Naive thymus-derived CD4-positive, alpha-beta T cell (primary cell): ENCODE measurements at regions of chr4 and their contacts with region 1.

Region 1: GRCh38 chr4:6327041-6327917 is 57.6 kb downstream of the WFS1 start:
- DNase-seq: peak; percentile 48 to 85 (median 69)
- ATAC-seq: peak; percentile 75
- H3K4me3 ChIP-seq: no peak overlapping the region
- H3K4me3 Mint-ChIP-seq: no peak overlapping the region
- H3K27ac ChIP-seq: no peak overlapping the region
- H3K27ac Mint-ChIP-seq: no peak overlapping the region
- H3K4me1 ChIP-seq: no peaks in the 10 kb centered on the region
- H3K4me1 Mint-ChIP-seq: peaks cover 0 to 17% (median 0%) of the 10 kb centered on the region in 7 donors
- H3K27me3 ChIP-seq: peaks cover 0 to 3% of the 10 kb centered on the region in 2 donors
- H3K27me3 Mint-ChIP-seq: peaks cover 7 to 47% (median 25%) of the 10 kb centered on the region in 5 donors

Region 2: DNA sequence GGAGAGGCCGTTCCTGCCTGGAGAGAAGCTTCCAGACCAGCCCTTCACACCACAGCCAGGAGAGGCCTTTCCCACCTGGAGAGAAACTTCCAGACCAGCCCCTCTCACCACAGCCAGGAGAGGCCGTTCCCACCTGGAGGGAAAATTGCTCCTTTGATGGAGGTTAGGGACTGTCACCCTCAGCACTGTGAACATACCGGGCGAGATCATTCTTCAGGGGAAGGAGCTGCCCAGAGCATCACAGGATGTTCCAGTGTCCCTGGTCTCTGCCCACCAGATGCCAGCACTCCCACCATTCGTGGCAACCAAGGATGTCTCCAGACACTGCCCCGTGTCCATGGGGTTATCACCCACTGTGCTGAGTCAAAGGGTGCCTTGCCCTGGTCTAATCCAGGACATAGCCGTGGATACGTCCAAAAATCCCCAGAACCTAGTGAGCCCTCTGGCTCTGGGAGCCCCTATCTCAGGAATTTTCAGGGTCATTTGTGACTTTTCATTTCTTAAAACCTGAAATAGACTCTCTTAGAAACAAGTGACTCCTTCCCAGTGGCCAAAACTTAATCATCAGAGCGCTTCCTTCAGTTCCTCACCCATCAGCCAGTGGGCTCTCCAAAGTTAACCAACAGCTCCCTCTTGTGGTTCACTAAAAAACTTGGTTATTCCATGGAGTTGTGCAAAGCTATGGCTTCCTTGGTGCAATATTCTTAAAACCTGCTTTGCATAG is 514.6 kb before region 1 on chr4:
- CTCF ChIA-PET with region 1: no interaction called
- POLR2A ChIA-PET with region 1: no interaction called
- intact Hi-C with region 1: no loop called
- DNase-seq: peak in 4 of 9 donors; percentile 13 to 32 (median 14)
- ATAC-seq: peak; percentile 51
- H3K4me3 ChIP-seq: no peak overlapping the region
- H3K4me3 Mint-ChIP-seq: no peak overlapping the region
- H3K27ac ChIP-seq: no peak overlapping the region
- H3K27ac Mint-ChIP-seq: no peak overlapping the region
- H3K4me1 ChIP-seq: no peaks in the 10 kb centered on the region
- H3K4me1 Mint-ChIP-seq: no peaks in the 10 kb centered on the region
- H3K27me3 ChIP-seq: no peaks in the 10 kb centered on the region
- H3K27me3 Mint-ChIP-seq: peaks cover 0 to 11% (median 0%) of the 10 kb centered on the region in 5 donors

Region 3: DNA sequence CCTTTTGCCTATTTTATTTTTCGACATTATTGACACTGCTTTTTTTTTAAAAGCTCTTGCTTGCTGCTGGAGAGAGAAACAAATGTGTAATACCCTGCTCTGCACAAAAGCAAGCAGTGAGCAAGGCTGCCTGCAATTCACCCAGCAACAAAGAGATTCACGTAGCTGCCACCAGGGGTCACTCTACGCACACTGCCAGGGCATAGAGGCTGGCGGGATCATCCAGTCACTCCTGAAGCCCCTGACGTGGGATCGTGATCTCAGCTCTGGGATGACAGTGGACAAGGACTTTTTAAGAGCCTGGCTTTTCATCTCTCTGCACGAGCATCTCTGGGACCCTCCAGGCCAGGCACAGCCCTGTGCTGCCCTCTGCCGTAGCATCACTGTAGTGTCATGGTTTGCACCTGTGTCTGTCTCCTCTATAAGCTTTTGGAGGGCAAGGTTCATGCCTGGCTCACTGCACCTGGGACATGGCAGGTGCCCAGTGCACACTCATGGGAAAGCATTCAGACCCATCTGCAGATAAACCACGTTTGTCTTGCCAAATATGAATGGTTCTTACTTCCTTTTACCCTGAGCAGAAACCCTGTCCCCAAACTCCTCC is 328.8 kb before region 1 on chr4:
- CTCF ChIA-PET with region 1: interaction called, 3 read pairs
- POLR2A ChIA-PET with region 1: no interaction called
- intact Hi-C with region 1: loop called in 1 of 2 experiments (anchors 1 kb)
- DNase-seq: peak in 6 of 9 donors; percentile 4 to 51 (median 11)
- ATAC-seq: peak; percentile 60
- H3K4me3 ChIP-seq: no peak overlapping the region
- H3K4me3 Mint-ChIP-seq: no peak overlapping the region
- H3K27ac ChIP-seq: no peak overlapping the region
- H3K27ac Mint-ChIP-seq: no peak overlapping the region
- H3K4me1 ChIP-seq: no peaks in the 10 kb centered on the region
- H3K4me1 Mint-ChIP-seq: peaks cover 0 to 3% (median 0%) of the 10 kb centered on the region in 7 donors
- H3K27me3 ChIP-seq: no peaks in the 10 kb centered on the region
- H3K27me3 Mint-ChIP-seq: peaks cover 0 to 35% (median 11%) of the 10 kb centered on the region in 5 donors

Region 4: GRCh38 chr4:6134612-6135220 is 192.6 kb before region 1 on chr4:
- CTCF ChIA-PET with region 1: no interaction called
- POLR2A ChIA-PET with region 1: no interaction called
- intact Hi-C with region 1: loop called in 1 of 2 experiments (anchors 1 kb)
- DNase-seq: peak in 1 of 9 donors; percentile 11
- ATAC-seq: peak; percentile 86
- H3K4me3 ChIP-seq: no peak overlapping the region
- H3K4me3 Mint-ChIP-seq: no peak overlapping the region
- H3K27ac ChIP-seq: no peak overlapping the region
- H3K27ac Mint-ChIP-seq: no peak overlapping the region
- H3K4me1 ChIP-seq: peaks cover 0 to 5% of the 10 kb centered on the region in 2 donors
- H3K4me1 Mint-ChIP-seq: peaks cover 0 to 11% (median 0%) of the 10 kb centered on the region in 7 donors
- H3K27me3 ChIP-seq: no peaks in the 10 kb centered on the region
- H3K27me3 Mint-ChIP-seq: peaks cover 0 to 9% (median 7%) of the 10 kb centered on the region in 5 donors

Region 5: DNA sequence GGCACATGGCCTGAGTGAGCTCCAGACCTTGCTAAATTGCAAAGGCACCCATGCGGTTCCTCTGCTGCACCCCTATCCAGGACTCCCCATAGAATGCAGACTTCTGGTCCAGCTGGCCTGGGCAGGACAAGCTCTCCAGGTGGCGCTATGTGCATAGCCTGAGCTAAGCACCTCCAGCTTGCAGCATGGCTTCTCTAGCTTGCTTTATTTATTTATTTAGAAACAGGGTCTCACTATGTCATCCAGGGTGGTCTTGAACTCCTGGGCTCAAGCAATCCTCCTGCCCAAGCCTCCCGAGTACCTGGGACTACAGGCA is 63.1 kb before region 1 on chr4:
- CTCF ChIA-PET with region 1: interaction called, 9 read pairs
- POLR2A ChIA-PET with region 1: no interaction called
- intact Hi-C with region 1: loop called (anchors 1 kb)
- DNase-seq: no peak
- ATAC-seq: peak; percentile 40
- H3K4me3 ChIP-seq: no peak overlapping the region
- H3K4me3 Mint-ChIP-seq: no peak overlapping the region
- H3K27ac ChIP-seq: no peak overlapping the region
- H3K27ac Mint-ChIP-seq: no peak overlapping the region
- H3K4me1 ChIP-seq: peaks cover 0 to 6% of the 10 kb centered on the region in 2 donors
- H3K4me1 Mint-ChIP-seq: peaks cover 11 to 22% (median 15%) of the 10 kb centered on the region in 7 donors
- H3K27me3 ChIP-seq: no peaks in the 10 kb centered on the region
- H3K27me3 Mint-ChIP-seq: peaks cover 4 to 41% (median 13%) of the 10 kb centered on the region in 5 donors

Region 6: DNA sequence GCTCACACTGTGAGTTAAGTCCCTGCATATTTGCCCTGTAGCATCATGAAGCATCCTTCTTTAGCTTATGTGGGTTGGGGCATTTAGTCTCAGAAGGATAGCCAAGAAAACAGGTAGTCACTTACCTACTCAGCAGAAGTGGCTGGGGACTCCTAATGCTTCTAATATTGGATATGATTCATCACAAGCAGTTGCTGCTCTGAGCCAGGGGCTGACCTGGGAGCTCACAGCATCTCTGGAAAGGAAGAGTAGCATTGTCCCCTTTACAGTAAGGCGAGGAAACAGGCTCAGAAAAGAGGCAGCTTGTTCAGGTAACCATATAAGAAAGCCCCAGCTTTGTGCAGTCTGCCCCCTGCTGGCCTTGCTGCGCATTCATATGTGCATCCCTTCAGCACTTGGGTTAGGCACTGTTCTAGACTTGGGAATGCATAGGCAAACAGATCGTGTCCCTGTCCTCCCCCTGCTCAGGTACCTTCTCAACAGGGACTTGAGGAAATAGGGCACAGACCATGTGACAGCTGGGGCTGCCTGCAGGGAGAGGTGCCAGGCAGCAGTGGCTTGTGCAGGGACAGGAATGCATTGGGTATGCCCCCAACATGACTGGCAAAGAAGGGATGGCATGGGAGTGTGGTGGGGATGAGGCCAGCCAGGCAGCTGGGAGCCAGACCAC is 546.6 kb after region 1 on chr4:
- CTCF ChIA-PET with region 1: no interaction called
- POLR2A ChIA-PET with region 1: no interaction called
- intact Hi-C with region 1: loop called in 1 of 2 experiments (anchors 5 kb)
- DNase-seq: peak; percentile 62 to 80 (median 73)
- ATAC-seq: peak; percentile 81
- H3K4me3 ChIP-seq: no peak overlapping the region
- H3K4me3 Mint-ChIP-seq: no peak overlapping the region
- H3K27ac ChIP-seq: no peak overlapping the region
- H3K27ac Mint-ChIP-seq: peak overlapping the region in 3 of 9 donors; percentile 53 to 59 (median 54)
- H3K4me1 ChIP-seq: no peaks in the 10 kb centered on the region
- H3K4me1 Mint-ChIP-seq: peaks cover 0 to 20% (median 6%) of the 10 kb centered on the region in 7 donors
- H3K27me3 ChIP-seq: no peaks in the 10 kb centered on the region
- H3K27me3 Mint-ChIP-seq: no peaks in the 10 kb centered on the region

Region 7: GRCh38 chr4:6963139-6963611 is 635.9 kb after region 1 on chr4:
- CTCF ChIA-PET with region 1: no interaction called
- POLR2A ChIA-PET with region 1: no interaction called
- intact Hi-C with region 1: no loop called
- DNase-seq: no peak
- ATAC-seq: no peak
- H3K4me3 ChIP-seq: no peak overlapping the region
- H3K4me3 Mint-ChIP-seq: no peak overlapping the region
- H3K27ac ChIP-seq: no peak overlapping the region
- H3K27ac Mint-ChIP-seq: no peak overlapping the region
- H3K4me1 ChIP-seq: peaks cover 0 to 7% of the 10 kb centered on the region in 2 donors
- H3K4me1 Mint-ChIP-seq: peaks cover 14 to 59% (median 52%) of the 10 kb centered on the region in 7 donors
- H3K27me3 ChIP-seq: no peaks in the 10 kb centered on the region
- H3K27me3 Mint-ChIP-seq: no peaks in the 10 kb centered on the region